ENCODE measurements at regions of chr7 and their contacts with region 1.

Region 1: GRCh38 chr7:51977913-51978312 is 661.3 kb upstream of the COBL start:
- DNase-seq: no peak
- H3K4me3 ChIP-seq: no peak overlapping the region
- H3K27ac ChIP-seq: no peak overlapping the region
- H3K4me1 ChIP-seq: no peaks in the 10 kb centered on the region
- H3K27me3 ChIP-seq: no peaks in the 10 kb centered on the region
- CTCF ChIP-seq: no peak
- POLR2A ChIP-seq: no peak

Region 2: GRCh38 chr7:52684388-52684787 is 706.5 kb after region 1 on chr7:
- intact Hi-C with region 1: loop called (anchors 5 kb)
- DNase-seq: no peak
- H3K4me3 ChIP-seq: no peak overlapping the region
- H3K27ac ChIP-seq: no peak overlapping the region
- H3K4me1 ChIP-seq: no peaks in the 10 kb centered on the region
- H3K27me3 ChIP-seq: no peaks in the 10 kb centered on the region
- CTCF ChIP-seq: no peak
- POLR2A ChIP-seq: no peak

Region 3: DNA sequence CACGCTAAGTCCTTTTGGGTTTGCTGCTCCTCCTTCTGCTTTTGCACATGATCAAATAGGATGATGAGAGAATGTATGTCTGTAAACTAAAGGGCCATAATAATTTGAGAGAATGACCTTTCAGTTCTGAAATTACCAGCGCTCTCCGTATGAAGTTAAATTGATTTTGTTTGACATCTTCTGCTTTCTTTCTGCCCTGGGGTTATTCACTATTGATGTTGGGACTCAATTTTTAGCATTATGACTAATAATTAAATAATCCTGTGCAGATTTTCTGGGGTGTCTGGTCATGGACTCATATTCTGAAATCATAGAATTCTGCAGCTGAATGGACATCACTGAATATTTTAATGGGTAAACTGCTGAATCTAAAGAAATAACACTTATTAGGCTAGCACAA is 1480.7 kb after region 1 on chr7:
- intact Hi-C with region 1: no loop called
- DNase-seq: no peak
- H3K4me3 ChIP-seq: no peak overlapping the region
- H3K27ac ChIP-seq: no peak overlapping the region
- H3K4me1 ChIP-seq: no peaks in the 10 kb centered on the region
- H3K27me3 ChIP-seq: no peaks in the 10 kb centered on the region
- CTCF ChIP-seq: no peak
- POLR2A ChIP-seq: no peak

Measured in breast epithelium (tissue), 4 donors.